ENCODE measurements at regions of chr1 and their contacts with region 1.

Region 1: DNA sequence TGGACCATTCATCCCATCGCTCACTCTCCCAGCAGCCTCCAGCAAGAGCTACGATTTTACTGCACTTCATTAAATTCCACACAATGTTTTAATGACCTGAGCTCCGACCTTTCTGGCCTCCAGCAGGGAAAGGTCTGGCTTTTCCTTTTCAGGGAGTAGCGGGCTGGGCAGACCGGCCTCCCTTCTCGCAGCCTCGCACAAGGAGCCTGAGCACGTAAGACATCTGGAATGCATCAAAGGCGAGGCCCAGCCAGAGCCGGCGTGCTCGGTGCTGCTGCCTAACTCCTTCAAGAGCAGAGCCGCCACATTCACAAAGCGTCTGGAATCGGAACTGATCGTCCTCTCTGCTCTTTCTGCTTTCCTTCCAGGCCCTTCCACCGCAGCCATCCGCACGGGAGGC is 32.5 kb upstream of the FHAD1 start:
- DNase-seq: peak; percentile 93
- H3K4me3 ChIP-seq: no peak overlapping the region
- H3K27ac ChIP-seq: peak overlapping the region; percentile 28 to 91 (median 86)
- H3K4me1 ChIP-seq: peaks cover 0 to 56% (median 38%) of the 10 kb centered on the region in 4 donors
- H3K27me3 ChIP-seq: no peaks in the 10 kb centered on the region
- CTCF ChIP-seq: peak in 1 of 4 experiments; percentile 11
- EP300 ChIP-seq: no peak
- POLR2A ChIP-seq: no peak

Region 2: DNA sequence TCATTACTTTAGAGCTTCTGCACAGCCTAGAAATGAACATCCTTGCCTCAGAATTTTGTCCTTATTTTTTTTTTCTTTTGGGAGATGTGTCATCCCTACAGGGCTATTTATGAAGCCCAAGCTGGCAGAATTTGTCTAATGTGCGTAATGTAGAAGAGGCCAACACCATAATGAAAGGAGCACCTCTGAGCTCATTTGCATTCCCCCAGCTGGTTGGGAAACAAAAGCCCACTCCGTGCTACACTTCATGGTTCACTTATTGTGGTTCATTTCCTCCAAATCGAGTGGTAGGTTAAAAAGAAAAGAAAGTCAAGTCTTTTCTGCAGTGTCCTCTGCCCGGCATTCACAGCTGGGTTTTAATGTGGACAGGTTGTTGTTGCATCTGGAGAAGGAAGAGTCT is 542.5 kb before region 1 on chr1:
- intact Hi-C with region 1: no loop called
- DNase-seq: no peak
- H3K4me3 ChIP-seq: no peak overlapping the region
- H3K27ac ChIP-seq: no peak overlapping the region
- H3K4me1 ChIP-seq: no peaks in the 10 kb centered on the region
- H3K27me3 ChIP-seq: no peaks in the 10 kb centered on the region
- CTCF ChIP-seq: no peak
- EP300 ChIP-seq: no peak
- POLR2A ChIP-seq: no peak

Region 3: DNA sequence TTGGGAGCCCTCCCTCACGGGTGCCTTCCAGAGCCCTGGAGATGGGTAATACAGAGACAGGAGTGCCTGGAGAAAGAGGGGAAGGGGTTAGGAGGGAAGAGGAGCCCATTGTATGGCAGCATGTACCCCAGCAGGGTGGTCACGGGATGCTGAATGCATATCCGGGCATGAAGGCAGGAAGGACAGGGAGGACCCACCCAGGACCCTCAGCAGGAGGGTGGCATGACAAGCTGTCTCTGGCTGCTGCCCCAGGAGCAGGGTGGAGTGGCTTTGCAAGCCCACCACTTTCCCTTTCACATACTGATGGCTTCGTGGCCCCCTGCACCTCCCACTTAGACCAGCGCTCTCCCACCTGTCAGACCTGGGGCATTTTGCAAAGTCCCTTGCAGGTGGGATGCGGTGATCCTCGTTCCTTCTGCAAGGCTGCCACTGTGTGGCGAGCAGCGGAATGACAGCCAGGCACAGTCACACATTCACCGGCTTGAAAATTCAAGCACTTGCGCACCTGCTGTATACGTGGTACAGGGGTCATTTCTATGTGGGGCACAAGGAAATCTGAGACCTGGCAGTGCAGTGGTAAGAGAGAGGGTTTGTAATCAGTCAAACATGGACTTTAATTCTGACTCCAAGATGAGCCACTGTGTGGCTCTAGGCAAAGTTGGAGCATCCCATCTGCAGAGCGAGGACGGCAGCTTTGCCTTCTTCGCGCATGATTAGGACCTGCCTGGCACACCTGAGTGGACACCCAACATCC is 114.2 kb before region 1 on chr1:
- intact Hi-C with region 1: no loop called
- DNase-seq: no peak
- H3K4me3 ChIP-seq: no peak overlapping the region
- H3K27ac ChIP-seq: no peak overlapping the region
- H3K4me1 ChIP-seq: no peaks in the 10 kb centered on the region
- H3K27me3 ChIP-seq: peaks cover 0 to 23% (median 6%) of the 10 kb centered on the region in 3 donors
- CTCF ChIP-seq: peak; percentile 68 to 89 (median 80)
- EP300 ChIP-seq: no peak
- POLR2A ChIP-seq: no peak

Region 4: DNA sequence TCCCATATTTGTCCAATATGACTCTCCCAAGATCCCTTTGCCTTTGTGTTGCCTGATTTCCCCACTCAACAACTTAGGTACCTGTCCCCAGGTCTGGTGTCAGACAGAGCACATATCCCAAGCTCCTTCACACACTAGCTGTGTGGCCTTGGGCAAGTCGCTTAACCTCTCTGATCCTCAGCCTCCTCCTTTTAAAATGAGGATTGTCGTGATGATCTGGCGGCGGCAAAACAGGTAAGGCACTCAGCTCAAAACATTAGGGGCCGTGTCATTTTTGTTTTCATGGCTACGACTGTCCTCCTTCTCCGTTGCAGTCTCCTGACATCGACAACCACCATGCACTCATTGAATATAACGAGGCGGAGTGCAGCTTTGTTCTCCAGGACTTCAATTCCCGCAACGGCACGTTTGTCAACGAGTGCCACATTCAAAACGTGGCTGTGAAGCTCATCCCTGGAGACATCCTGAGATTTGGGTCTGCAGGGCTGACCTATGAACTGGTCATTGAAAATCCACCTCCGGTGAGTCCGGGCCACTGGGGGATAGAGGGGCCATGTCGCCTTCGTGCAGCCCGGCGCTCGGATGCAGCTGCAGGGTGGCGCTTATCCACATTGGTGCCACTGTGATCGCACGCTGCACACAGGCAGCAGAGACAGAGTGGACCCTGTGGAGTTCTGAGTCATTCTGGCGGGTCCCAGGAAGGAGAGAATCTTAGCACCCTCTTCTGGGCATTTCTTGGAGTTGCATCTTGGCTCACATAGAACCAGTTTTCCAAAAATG is 57.7 kb after region 1 on chr1:
- intact Hi-C with region 1: loop called (anchors 5 kb)
- DNase-seq: peak; percentile 83
- H3K4me3 ChIP-seq: no peak overlapping the region
- H3K27ac ChIP-seq: no peak overlapping the region
- H3K4me1 ChIP-seq: peaks cover 0 to 10% (median 6%) of the 10 kb centered on the region in 4 donors
- H3K27me3 ChIP-seq: no peaks in the 10 kb centered on the region
- CTCF ChIP-seq: peak; percentile 71 to 83 (median 80)
- EP300 ChIP-seq: no peak
- POLR2A ChIP-seq: no peak